ENCODE measurements at regions of chr6 and their contacts with region 1.

Region 1: GRCh38 chr6:66662196-66662595 is 955.2 kb upstream of the EYS start:
- DNase-seq: no peak
- ATAC-seq: no peak
- H3K4me3 ChIP-seq: no peak overlapping the region
- H3K27ac ChIP-seq: no peak overlapping the region
- H3K4me1 ChIP-seq: no peaks in the 10 kb centered on the region
- H3K27me3 ChIP-seq: no peaks in the 10 kb centered on the region
- CTCF ChIP-seq: peak in 6 of 9 donors; percentile 26 to 46 (median 38)

Region 2: GRCh38 chr6:65399355-65400084 is 1262.7 kb before region 1 on chr6:
- intact Hi-C with region 1: no loop called
- DNase-seq: no peak
- ATAC-seq: no peak
- H3K4me3 ChIP-seq: no peak overlapping the region
- H3K27ac ChIP-seq: no peak overlapping the region
- H3K4me1 ChIP-seq: no peaks in the 10 kb centered on the region
- H3K27me3 ChIP-seq: no peaks in the 10 kb centered on the region
- CTCF ChIP-seq: no peak

Region 3: GRCh38 chr6:66533921-66534404 is 128.2 kb before region 1 on chr6:
- intact Hi-C with region 1: no loop called
- DNase-seq: no peak
- ATAC-seq: no peak
- H3K4me3 ChIP-seq: no peak overlapping the region
- H3K27ac ChIP-seq: no peak overlapping the region
- H3K4me1 ChIP-seq: no peaks in the 10 kb centered on the region
- H3K27me3 ChIP-seq: no peaks in the 10 kb centered on the region
- CTCF ChIP-seq: no peak

Region 4: DNA sequence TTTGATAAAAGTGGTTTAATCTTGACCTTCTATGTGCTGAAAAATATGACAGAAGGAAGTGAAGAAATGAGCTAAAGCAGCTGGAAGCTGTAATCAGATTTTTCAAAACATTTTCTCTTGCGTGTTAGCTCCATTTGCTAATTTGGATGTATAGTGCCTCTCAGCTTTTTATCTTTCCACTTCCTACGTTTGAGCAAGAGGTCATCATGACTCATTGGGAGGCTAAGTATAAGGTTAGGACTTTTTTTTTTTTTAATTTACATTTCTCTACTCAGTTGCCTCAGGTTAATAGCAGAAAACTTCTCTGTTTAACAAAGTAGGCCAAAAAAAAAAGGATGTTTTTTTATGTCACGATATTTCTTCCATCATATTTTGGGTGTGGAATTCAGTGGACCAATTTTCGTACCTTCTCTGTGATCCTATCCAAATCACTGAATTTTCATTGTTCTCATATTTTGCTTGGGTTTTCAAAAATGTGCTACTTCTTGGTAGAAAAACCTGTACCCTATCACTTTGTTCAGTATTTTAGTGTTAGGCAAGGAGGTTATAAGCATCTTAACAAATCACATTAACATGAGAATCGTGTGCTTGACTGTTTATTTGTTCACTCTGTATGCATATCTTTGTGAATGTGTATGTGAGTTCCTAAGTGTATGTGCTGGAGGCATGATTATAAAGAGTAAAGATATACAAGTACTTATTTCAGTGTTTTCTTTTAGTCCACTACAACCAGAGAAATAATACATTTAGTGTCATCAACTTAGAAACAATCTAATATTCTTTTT is 73.1 kb after region 1 on chr6:
- intact Hi-C with region 1: loop called in 1 of 10 experiments (anchors 1 kb)
- DNase-seq: no peak
- ATAC-seq: no peak
- H3K4me3 ChIP-seq: no peak overlapping the region
- H3K27ac ChIP-seq: no peak overlapping the region
- H3K4me1 ChIP-seq: no peaks in the 10 kb centered on the region
- H3K27me3 ChIP-seq: no peaks in the 10 kb centered on the region
- CTCF ChIP-seq: no peak

Region 5: GRCh38 chr6:67094431-67094946 is 432.3 kb after region 1 on chr6:
- intact Hi-C with region 1: no loop called
- DNase-seq: no peak
- ATAC-seq: no peak
- H3K4me3 ChIP-seq: no peak overlapping the region
- H3K27ac ChIP-seq: no peak overlapping the region
- H3K4me1 ChIP-seq: no peaks in the 10 kb centered on the region
- H3K27me3 ChIP-seq: no peaks in the 10 kb centered on the region
- CTCF ChIP-seq: no peak